Activated T-helper 1 cell treated with anti-CD3 and anti-CD28 coated beads, Interleukin-12 subunit alpha, Interleukin-12 subunit beta, Interleukin-2, Interleukin-4 antibody, amounts not matched to agents 30 ng/mL and 10 ng/mL and 1 ng/mL, durations not matched to agents 14 hours and 24 hours and 36 hours (primary cell): ENCODE measurements at regions of chr10 and their contacts with region 1.

Region 1: DNA sequence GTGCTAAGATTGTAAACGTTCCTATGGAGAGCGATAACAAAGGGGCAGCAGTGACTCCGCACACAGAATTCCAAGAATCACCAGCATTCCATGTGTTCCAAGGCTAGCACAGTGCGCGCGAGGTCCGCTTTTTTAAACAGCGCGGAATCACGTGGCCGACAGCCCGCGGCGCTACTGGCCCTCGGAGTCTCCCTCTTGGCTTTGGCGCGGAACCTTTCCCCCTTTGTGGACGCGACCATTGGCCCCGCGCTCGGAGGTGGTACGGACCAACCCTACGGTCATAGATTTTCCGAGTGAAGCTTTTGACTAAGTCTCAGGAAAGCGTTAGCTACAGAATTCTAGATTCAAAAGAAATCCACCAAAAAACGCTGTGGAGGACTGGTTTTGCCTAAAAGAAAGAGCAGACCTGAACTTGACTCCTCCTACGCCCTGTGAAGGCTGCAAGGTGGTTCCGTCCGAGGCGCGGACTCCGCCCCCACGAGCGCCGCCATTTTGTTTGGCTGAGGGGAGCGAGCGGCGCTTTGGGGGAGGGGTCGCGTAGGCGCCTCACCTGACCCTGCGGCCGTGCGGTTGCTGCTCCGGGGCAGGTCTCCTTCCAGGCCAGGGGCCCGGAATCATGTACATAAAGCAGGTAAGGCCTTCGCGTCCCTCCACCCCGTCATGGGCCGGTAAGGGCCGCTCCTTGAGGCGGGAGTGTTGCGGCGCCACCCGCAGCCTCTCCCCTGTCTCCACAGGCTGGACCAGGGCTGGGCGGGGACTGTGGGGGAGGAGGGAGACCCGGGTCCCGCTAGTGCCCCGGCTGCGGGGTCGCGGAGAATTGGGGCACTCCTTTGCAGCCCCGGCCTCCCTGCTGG is at the start of gene SMC3:
- DNase-seq: peak; percentile 89
- H3K4me3 Mint-ChIP-seq: peak within 1 kb of the TSS; percentile 93
- H3K27ac Mint-ChIP-seq: peak within 1 kb of the TSS; percentile 96
- H3K4me1 Mint-ChIP-seq: peaks cover 44% of the 10 kb centered on the region
- H3K27me3 Mint-ChIP-seq: peaks cover 14% of the 10 kb centered on the region
- total RNA-seq, gene SMC3: 74.5 and 77.9 TPM in 2 replicates

Region 2: GRCh38 chr10:109922976-109923921 is 644.2 kb before region 1 on chr10 and contains the start of gene XPNPEP1:
- intact Hi-C with region 1: loop called (anchors 2 kb)
- DNase-seq: peak; percentile 81
- H3K4me3 Mint-ChIP-seq: peak within 1 kb of the TSS; percentile 94
- H3K27ac Mint-ChIP-seq: peak within 1 kb of the TSS; percentile 92
- H3K4me1 Mint-ChIP-seq: peaks cover 58% of the 10 kb centered on the region
- H3K27me3 Mint-ChIP-seq: peaks cover 5% of the 10 kb centered on the region
- total RNA-seq, gene XPNPEP1: 85.1 and 93.2 TPM in 2 replicates

Region 3: DNA sequence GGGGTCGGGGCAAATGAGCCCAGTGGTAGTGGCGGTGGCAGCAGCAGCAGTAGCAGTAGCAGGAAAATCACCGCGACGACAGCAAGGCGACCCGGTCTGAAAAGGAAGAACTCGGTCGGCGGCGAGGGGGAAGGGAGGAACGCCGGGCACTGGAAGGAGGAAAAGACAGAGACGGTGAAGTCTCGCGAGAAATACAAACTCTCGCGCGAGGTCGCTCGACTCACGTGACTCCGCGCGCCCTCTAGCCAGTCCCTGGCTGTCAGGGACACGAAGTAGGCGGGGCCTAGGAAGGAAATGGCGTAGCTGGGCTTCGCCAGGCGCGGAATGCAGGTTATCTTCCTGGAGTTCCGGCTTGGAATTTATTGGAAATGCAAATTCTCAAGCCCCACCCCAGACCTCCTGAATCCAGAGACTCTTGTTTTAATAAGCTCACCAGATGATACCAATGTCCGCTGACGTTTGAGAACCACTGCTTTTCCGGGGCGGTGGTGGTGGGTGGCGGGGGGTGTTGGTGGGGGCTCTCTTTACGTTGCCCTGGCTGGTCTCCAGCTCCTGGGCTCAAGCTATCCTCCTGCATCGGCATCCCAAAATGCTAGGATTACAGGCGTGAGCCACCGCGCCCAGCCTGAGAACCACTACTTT is 262.5 kb before region 1 on chr10 and contains the start of gene SMNDC1:
- intact Hi-C with region 1: loop called (anchors 1 kb)
- DNase-seq: peak; percentile 96
- H3K4me3 Mint-ChIP-seq: peak within 1 kb of the TSS; percentile 97
- H3K27ac Mint-ChIP-seq: peak within 1 kb of the TSS; percentile 96
- H3K4me1 Mint-ChIP-seq: peaks cover 48% of the 10 kb centered on the region
- H3K27me3 Mint-ChIP-seq: no peaks in the 10 kb centered on the region
- total RNA-seq, gene SMNDC1: 47.8 and 48.0 TPM in 2 replicates

Region 4: GRCh38 chr10:110528224-110528997 is 39.0 kb before region 1 on chr10:
- intact Hi-C with region 1: loop called (anchors 1 kb)
- DNase-seq: no peak
- H3K4me3 Mint-ChIP-seq: peak overlapping the region; percentile 64
- H3K27ac Mint-ChIP-seq: peak overlapping the region; percentile 94
- H3K4me1 Mint-ChIP-seq: peaks cover 83% of the 10 kb centered on the region
- H3K27me3 Mint-ChIP-seq: no peaks in the 10 kb centered on the region

Region 5: DNA sequence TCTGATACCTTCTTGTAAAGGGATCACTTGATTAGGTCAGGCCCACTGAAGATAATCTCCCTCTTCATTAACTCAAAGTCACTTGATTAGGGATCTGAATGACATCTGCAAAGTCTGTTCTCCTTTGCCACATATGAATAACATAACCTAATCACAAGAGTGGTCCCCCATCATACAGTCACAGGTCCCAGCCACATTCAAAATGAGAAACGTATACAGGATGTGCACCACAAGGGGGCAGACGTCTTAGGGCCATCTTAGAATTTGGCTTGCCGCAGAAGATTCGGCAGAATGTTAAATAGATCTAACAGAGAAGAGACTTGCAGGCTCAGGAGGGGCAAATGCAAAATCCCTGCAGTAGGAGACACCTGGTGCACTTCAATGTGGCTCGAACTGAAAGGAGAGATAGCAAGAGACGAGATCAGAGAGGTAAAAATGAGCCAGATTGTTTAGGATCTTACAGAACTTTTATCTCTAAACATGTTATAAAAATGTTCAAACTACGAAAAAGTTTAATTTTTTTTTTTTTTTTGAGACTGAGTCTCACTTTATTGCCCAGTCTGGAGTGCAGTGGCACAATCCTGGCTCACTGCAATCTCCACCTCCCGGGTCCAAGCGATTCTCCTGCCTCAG is 10.3 kb before region 1 on chr10:
- intact Hi-C with region 1: loop called (anchors 1 kb)
- DNase-seq: peak; percentile 26
- H3K4me3 Mint-ChIP-seq: no peak overlapping the region
- H3K27ac Mint-ChIP-seq: no peak overlapping the region
- H3K4me1 Mint-ChIP-seq: peaks cover 5% of the 10 kb centered on the region
- H3K27me3 Mint-ChIP-seq: peaks cover 47% of the 10 kb centered on the region

Region 6: GRCh38 chr10:110872984-110873549 is 305.6 kb after region 1 on chr10:
- intact Hi-C with region 1: no loop called
- DNase-seq: no peak
- H3K4me3 Mint-ChIP-seq: peak overlapping the region; percentile 96
- H3K27ac Mint-ChIP-seq: peak overlapping the region; percentile 95
- H3K4me1 Mint-ChIP-seq: peaks cover 67% of the 10 kb centered on the region
- H3K27me3 Mint-ChIP-seq: no peaks in the 10 kb centered on the region